ENCODE measurements at regions of chr17 and their contacts with region 1.

Region 1: DNA sequence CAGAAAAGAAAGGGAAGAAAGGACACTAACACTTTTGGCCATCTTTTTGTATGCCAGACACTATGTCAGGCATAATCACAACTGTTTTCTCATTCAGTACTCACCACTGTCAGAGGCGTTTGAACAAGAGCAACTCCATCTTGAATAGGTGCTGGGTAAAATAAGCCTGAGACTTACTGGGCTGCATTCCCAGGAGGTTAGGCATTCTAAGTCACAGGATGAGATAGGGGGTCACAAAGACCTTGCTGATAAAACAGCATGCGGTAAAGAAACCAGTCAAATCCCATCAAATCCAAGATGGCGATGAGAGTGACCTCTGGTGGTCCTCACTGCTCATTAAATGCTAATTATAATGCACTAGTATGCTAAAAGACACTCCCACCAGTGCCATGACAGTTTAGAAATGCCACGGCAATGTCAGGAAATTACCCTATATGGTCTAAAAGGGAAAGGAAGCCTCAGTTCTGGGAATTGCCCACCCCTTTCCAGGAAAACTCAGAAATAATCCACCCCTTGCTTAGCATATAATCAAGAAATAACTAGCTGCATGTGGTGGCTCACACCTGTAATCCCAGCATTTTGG is 14.9 kb upstream of the LYRM9 start:
- DNase-seq: no peak
- H3K4me3 ChIP-seq: no peak overlapping the region
- CTCF ChIP-seq: no peak

Region 2: DNA sequence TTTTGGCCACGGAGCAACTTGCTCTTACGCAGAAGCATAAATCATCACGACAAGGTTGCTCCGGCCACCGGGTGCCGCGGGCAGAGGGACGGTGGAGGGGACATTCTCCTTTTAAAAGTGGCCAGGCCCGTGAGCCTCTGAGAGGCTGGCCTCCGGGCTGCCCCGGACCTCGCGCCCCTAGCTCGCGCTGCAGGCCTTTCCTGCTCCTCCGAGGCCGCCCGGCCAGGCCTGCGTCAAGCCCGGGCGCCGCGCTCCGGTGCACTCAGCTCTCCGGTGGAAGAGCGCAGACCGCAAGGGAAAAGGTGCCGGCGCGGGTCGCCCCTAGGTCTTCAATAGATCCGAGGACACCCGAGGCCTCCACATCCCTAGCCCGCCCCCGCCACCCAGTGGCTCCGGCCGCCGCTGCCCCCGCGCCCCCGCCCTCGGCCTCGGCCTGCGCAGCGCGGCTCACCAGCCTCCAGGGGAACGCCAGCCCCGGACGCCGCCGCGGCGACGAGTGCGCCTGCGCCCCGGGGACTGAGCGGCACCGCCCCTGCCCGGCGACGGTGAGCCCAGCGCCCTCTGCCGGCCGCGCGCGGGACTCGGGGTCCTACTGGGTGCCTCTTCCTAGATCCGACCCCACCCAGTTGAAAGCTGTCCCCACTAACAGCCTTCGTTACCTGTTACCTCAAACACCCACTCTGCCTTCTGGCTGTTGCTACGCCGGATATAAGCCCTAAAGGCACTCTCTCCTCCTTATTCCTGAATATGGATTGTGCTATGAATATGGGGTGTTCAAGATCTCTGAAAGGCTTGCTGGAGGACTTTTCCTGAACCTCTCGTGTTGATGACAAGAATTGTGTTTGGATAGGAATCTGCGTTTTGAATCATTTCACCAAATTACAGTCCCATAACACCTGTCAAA is 14.9 kb before region 1 on chr17 and contains the start of gene LYRM9:
- CTCF ChIA-PET with region 1: interaction called, 27 read pairs
- POLR2A ChIA-PET with region 1: no interaction called
- DNase-seq: no peak
- H3K4me3 ChIP-seq: peak within 1 kb of the TSS; percentile 66
- CTCF ChIP-seq: peak; percentile 86

Measured in AG04449 (cell line).